ENCODE measurements at regions of chr13 and their contacts with region 1.

Region 1: GRCh38 chr13:21603531-21604448 is at the start of gene MICU2:
- DNase-seq: peak; percentile 89 to 94
- H3K4me3 ChIP-seq: peak within 1 kb of the TSS; percentile 79 to 89
- H3K27ac ChIP-seq: peak within 1 kb of the TSS; percentile 93 to 96
- H3K4me1 ChIP-seq: peaks cover 0 to 8% (median 7%) of the 10 kb centered on the region in 4 donors
- H3K27me3 ChIP-seq: peaks cover 0 to 4% of the 10 kb centered on the region in 2 donors
- CTCF ChIP-seq: peak in 1 of 2 experiments; percentile 37

Region 2: DNA sequence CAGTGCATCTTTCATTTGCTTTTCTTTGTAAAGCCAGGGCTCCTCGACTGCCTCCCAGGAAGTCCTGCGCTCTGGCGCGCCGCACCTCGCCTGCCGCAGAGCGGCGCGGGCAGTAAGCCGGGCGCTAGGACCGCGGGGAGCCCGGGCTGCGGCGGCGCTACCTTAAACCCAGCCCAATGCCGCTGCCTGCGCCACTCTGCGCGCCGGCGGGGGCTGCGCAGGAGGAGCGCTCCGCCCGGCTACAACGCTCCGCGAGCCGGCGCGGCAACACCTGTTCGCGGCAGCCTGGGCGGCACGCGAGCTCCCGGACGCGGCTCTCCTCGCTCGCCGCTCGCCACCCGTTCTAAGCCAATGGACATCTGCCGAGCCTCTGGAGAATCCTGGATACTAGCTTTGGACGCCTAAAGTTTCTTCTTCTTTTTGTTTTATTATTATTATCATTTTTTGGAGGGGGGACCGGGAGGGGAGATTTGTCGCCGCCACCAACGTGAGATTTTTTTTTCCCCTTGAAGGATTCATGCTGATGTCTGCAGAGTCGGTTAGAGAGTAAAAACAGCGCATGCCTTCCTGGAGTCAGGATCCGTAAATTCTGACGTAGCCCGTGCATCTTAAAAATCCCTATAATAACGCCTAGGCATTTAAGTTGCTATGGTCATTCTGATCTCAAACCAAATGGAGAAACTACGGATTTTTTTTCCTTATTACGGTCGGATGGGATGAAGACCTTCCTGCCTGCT is 67.3 kb after region 1 on chr13 and contains the start of gene FGF9:
- intact Hi-C with region 1: loop called (anchors 2 kb)
- DNase-seq: peak; percentile 47 to 73
- H3K4me3 ChIP-seq: peak within 1 kb of the TSS; percentile 50 to 63
- H3K27ac ChIP-seq: peak within 1 kb of the TSS; percentile 0 to 14
- H3K4me1 ChIP-seq: peaks cover 0 to 61% (median 47%) of the 10 kb centered on the region in 4 donors
- H3K27me3 ChIP-seq: peaks cover 0 to 35% of the 10 kb centered on the region in 2 donors
- CTCF ChIP-seq: no peak

Measured in tibial artery (tissue), 4 donors.